K562 (cell line): ENCODE measurements at regions of chr2 and their contacts with region 1.

Region 1: DNA sequence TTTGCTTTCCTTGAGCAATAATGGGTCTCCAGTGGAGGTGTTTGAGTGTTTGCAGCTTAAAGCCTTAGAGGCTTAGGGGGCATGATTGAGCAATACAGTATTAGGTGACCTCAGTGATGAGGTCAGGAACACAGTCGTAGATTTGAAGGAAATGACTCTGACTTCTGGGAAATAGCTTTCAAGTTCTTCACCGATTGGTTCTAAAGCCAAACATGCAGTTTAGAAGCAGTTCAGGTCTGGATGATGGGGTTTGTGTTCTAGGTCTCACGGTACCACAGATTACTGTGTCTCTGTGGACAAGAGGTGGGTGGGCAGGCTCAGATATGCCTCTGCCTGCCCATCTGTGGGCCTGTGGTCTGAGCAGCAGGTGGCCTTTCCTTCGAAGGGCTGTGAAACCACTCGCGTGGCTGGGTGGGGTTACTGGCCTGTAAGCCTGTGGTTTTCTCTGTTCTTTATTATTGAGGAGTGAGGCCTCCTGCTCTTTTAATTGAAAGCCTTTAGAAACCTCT is 7.8 kb downstream of the MTHFD2 start:
- DNase-seq: peak; percentile 33 to 75 (median 46)
- ATAC-seq: peak; percentile 71
- H3K4me3 ChIP-seq: no peak overlapping the region
- H3K27ac ChIP-seq: peak overlapping the region; percentile 78; the same call in 2 of the 3 replicates
- H3K4me1 ChIP-seq: peaks cover 13 to 32% of the 10 kb centered on the region in 2 experiments
- H3K27me3 ChIP-seq: no peaks in the 10 kb centered on the region
- CTCF ChIP-seq: no peak
- EP300 ChIP-seq: no peak
- POLR2A ChIP-seq: no peak
- RAD21 ChIP-seq: 0 out of 4 replicates have a peak, but pooled peaks of 1 of the 2 experiments have one; percentile 4

Region 2: GRCh38 chr2:74191596-74192380 is 14.4 kb before region 1 on chr2:
- CTCF ChIA-PET with region 1: no interaction called
- POLR2A ChIA-PET with region 1: interaction called, 10 read pairs
- in situ Hi-C with region 1: no loop called
- intact Hi-C with region 1: no loop called
- DNase-seq: no peak
- ATAC-seq: no peak
- H3K4me3 ChIP-seq: no peak overlapping the region
- H3K27ac ChIP-seq: no peak overlapping the region
- H3K4me1 ChIP-seq: peaks cover 9 to 10% of the 10 kb centered on the region in 2 experiments
- H3K27me3 ChIP-seq: no peaks in the 10 kb centered on the region
- CTCF ChIP-seq: no peak
- EP300 ChIP-seq: no peak
- POLR2A ChIP-seq: no peak
- RAD21 ChIP-seq: no peak

Region 3: GRCh38 chr2:74223941-74224770 is 17.9 kb after region 1 on chr2:
- CTCF ChIA-PET with region 1: no interaction called
- POLR2A ChIA-PET with region 1: interaction called, 62 read pairs
- in situ Hi-C with region 1: no loop called
- intact Hi-C with region 1: no loop called
- DNase-seq: no peak
- ATAC-seq: no peak
- H3K4me3 ChIP-seq: no peak overlapping the region
- H3K27ac ChIP-seq: no peak overlapping the region
- H3K4me1 ChIP-seq: peaks cover 10 to 14% of the 10 kb centered on the region in 2 experiments
- H3K27me3 ChIP-seq: no peaks in the 10 kb centered on the region
- CTCF ChIP-seq: no peak
- EP300 ChIP-seq: no peak
- POLR2A ChIP-seq: no peak
- RAD21 ChIP-seq: no peak

Region 4: DNA sequence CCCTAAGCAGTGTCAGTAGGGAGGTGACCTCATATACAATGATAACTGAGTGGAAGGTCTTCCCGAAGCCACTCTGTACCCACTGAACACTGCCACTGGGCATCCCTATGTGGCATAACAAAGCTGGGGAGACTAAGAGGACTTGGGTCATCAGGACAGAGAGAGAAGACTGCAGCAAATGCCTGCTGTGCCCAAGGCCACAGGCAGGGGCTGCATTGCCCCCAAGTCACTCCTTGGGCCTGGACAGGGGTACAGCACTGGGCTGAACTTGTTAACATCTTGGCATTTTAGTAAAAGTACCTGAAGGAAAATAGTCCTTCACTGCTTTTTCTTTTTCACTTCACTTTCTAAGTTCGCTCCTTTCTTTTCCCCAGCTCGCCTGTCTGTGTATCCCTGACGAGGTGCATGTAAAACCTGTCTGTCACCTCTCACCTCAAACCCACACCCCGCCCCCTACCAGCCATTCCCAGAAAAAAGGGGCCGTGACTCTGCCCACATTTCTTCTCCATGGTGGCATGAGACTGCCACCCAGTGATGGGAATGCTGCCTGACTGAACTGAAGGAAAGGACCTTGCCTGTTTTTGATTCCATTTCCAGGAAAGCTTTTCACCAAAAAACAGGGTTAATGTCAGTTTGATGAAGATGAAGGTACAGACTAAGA is 55.1 kb after region 1 on chr2:
- CTCF ChIA-PET with region 1: no interaction called
- POLR2A ChIA-PET with region 1: no interaction called
- in situ Hi-C with region 1: no loop called
- intact Hi-C with region 1: no loop called
- DNase-seq: no peak
- ATAC-seq: no peak
- H3K4me3 ChIP-seq: no peak overlapping the region
- H3K27ac ChIP-seq: no peak overlapping the region
- H3K4me1 ChIP-seq: peaks cover 0 to 3% of the 10 kb centered on the region in 2 experiments; a peak in 1 of 5 replicates
- H3K27me3 ChIP-seq: peaks cover 0 to 24% of the 10 kb centered on the region in 2 experiments; a peak in 2 of 5 replicates
- CTCF ChIP-seq: peak; percentile 30 to 46 (median 32); a peak in 3 of 6 replicates
- EP300 ChIP-seq: no peak
- POLR2A ChIP-seq: no peak
- RAD21 ChIP-seq: peak; percentile 26 to 40; a peak in 2 of 4 replicates